A549 (cell line): ENCODE measurements at regions of chrX and their contacts with region 1.

Region 1: GRCh38 chrX:15930585-15930984 is 76.0 kb upstream of the AP1S2 start:
- DNase-seq: peak; percentile 6 to 45
- ATAC-seq: peak; percentile 59 to 69; a peak in 3 of 6 replicates
- H3K4me3 ChIP-seq: no peak overlapping the region
- H3K27ac ChIP-seq: no peak overlapping the region
- H3K4me1 ChIP-seq: no peaks in the 10 kb centered on the region
- CTCF ChIP-seq: peak; percentile 54
- EP300 ChIP-seq: no peak
- POLR2A ChIP-seq: no peak
- RAD21 ChIP-seq: peak; percentile 68 to 70

Region 2: DNA sequence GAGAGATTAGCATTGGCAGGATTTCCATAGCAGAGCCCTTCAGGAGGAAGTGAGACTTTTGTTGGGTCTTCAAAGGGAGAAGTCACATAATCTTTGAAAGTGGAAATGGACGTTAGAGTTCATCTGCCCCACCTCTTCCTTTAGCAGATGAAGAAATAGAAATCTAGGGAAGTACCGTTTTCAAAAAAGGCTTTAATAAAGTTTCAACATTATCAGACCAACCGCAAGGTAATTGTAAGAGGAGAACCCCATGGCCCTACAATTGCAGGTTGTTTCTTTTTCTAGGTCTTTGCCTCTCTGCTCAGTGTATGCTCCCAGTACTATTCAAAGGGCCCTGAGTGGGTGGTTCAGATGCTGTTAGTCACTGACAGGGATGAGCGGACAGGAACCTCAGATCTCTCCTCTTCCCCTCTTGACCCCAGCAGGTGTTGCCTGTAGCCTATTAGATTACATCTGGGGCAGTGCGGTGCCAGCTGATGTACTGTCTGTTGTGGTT is 27.4 kb before region 1 on chrX:
- CTCF ChIA-PET with region 1: no interaction called
- POLR2A ChIA-PET with region 1: no interaction called
- DNase-seq: no peak
- ATAC-seq: no peak
- H3K4me3 ChIP-seq: no peak overlapping the region
- H3K27ac ChIP-seq: no peak overlapping the region
- H3K4me1 ChIP-seq: no peaks in the 10 kb centered on the region
- CTCF ChIP-seq: no peak
- EP300 ChIP-seq: no peak
- POLR2A ChIP-seq: no peak
- RAD21 ChIP-seq: no peak

Region 3: GRCh38 chrX:15915959-15916703 is 14.5 kb before region 1 on chrX:
- CTCF ChIA-PET with region 1: interaction called, 10 read pairs
- POLR2A ChIA-PET with region 1: no interaction called
- DNase-seq: no peak
- ATAC-seq: no peak
- H3K4me3 ChIP-seq: no peak overlapping the region
- H3K27ac ChIP-seq: no peak overlapping the region
- H3K4me1 ChIP-seq: no peaks in the 10 kb centered on the region
- CTCF ChIP-seq: no peak
- EP300 ChIP-seq: no peak
- POLR2A ChIP-seq: no peak
- RAD21 ChIP-seq: no peak

Region 4: DNA sequence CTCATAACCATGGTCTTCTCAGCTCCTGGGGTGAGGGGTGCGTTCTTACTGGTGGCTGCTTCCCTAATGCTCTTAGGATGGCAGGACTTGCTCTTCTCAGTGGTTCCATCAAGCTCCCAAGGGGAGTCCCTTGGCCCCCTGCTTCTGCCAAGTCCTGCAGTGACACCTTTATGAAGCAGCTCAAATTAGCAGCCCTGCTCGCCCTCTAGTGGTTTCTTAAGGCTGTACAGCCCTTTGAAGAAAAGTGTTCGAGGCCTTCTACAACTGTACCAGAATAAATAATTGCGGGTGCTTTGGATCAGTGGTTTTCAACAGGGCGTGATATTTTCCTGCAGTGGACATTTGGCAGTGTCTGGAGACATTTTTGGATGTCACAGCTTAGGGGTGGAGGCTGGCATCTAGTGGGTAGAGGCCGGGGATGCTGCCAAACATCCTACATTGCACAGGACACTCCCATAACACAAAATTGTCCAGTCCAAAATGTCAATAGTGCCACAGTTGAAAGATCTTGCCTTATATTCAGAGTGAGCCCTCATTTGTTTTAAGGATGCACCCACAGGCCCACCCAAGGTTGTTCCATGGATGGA is 514.7 kb after region 1 on chrX:
- CTCF ChIA-PET with region 1: interaction called, 15 read pairs
- POLR2A ChIA-PET with region 1: no interaction called
- DNase-seq: peak; percentile 15 to 45
- ATAC-seq: peak; percentile 71 to 86; a peak in 5 of 6 replicates
- H3K4me3 ChIP-seq: no peak overlapping the region
- H3K27ac ChIP-seq: no peak overlapping the region
- H3K4me1 ChIP-seq: no peaks in the 10 kb centered on the region
- CTCF ChIP-seq: peak; percentile 54
- EP300 ChIP-seq: no peak
- POLR2A ChIP-seq: no peak
- RAD21 ChIP-seq: peak; percentile 60 to 67